Activated T-helper 2 cell treated with anti-CD3 and anti-CD28 coated beads, Interferon-gamma antibody, Interleukin-2, Interleukin-4, amounts not matched to agents 10 μg/mL and 5 μg/mL and 100 μg/mL, durations not matched to agents 14 hours and 24 hours and 36 hours (primary cell): ENCODE measurements at regions of chr11 and their contacts with region 1.

Region 1: GRCh38 chr11:103035791-103036434 is 56.0 kb downstream of the DCUN1D5 start:
- DNase-seq: peak; percentile 41
- H3K4me3 Mint-ChIP-seq: no peak overlapping the region
- H3K27ac Mint-ChIP-seq: peak overlapping the region; percentile 85
- H3K4me1 Mint-ChIP-seq: peaks cover 21% of the 10 kb centered on the region
- H3K27me3 Mint-ChIP-seq: peaks cover 3% of the 10 kb centered on the region

Region 2: DNA sequence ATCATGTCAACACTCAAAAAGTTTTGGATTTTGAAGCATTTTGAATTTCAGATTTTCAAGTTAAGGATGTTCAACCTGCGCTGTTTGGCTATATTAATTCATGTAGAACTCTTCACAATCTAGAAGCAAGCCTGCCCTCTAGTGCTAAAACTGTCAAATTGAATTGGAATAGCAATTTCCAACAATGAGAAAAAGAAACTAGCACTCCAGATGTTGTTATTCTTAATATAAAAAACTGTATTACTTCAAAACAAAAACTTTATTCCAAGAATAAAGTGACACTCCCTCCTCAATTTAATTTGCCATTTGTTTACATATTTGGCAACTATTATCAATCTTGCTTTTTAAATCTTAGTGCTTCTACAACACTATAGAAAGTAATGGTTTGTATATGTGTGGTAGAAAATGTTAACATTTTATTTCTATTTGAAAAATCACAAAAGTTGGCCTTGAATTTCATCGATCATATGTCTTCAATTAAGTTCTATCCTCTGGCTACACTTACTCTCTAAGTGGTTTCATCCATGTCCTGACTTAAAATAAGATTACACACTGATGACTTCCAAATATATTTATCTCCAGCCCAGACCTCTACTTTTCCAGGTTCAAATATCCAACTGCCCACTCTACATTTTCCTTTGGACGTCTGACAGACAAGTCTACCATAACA is 19.4 kb after region 1 on chr11:
- intact Hi-C with region 1: loop called (anchors 1 kb)
- DNase-seq: no peak
- H3K4me3 Mint-ChIP-seq: no peak overlapping the region
- H3K27ac Mint-ChIP-seq: no peak overlapping the region
- H3K4me1 Mint-ChIP-seq: peaks cover 3% of the 10 kb centered on the region
- H3K27me3 Mint-ChIP-seq: no peaks in the 10 kb centered on the region

Region 3: GRCh38 chr11:104120493-104121137 is 1084.7 kb after region 1 on chr11:
- intact Hi-C with region 1: loop called (anchors 5 kb)
- DNase-seq: no peak
- H3K4me3 Mint-ChIP-seq: no peak overlapping the region
- H3K27ac Mint-ChIP-seq: no peak overlapping the region
- H3K4me1 Mint-ChIP-seq: no peaks in the 10 kb centered on the region
- H3K27me3 Mint-ChIP-seq: no peaks in the 10 kb centered on the region